GM13977 (cell line): ENCODE measurements at regions of chr3 and their contacts with region 1.

Region 1: GRCh38 chr3:153026026-153026425 is 136.0 kb upstream of the RAP2B start:
- DNase-seq: peak; percentile 24
- CTCF ChIP-seq: peak; percentile 64

Region 2: DNA sequence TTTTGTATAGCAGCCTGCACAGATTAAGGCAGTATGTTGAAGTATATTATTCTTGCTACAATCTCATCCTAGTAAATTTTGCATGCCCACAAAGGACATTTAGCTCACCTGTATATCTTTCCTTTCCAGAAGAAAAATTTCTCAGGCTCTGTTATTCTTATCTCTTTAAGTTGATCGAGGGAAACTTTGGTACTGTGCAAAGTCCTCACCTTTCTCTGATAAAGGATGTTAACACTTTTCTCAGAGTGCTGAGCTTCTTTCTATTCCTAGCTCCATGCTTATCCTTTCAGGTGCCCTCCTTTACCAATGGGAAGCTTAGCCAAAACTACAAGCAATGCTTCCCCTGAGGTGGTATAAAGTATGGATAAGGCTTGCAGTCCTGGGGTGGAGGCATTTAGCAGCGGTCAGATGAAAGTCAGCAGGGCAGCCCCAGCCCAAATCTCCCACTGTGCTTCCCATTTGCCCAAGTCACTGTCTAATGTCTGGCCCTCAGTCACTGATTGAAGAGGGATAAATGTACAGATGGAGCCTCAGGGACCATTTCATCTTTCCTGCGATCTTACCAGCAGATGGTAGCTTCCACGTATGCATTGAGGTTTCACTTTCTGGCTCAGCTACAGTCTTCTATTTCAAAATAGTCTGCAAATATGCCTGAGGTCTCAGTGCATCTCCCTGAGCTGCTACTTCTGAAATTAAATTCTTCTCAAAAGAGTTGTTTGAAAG is 318.9 kb before region 1 on chr3:
- in situ Hi-C with region 1: no loop called
- DNase-seq: no peak
- CTCF ChIP-seq: no peak

Region 3: GRCh38 chr3:153232910-153233271 is 206.9 kb after region 1 on chr3:
- in situ Hi-C with region 1: no loop called
- DNase-seq: no peak
- CTCF ChIP-seq: no peak

Region 4: DNA sequence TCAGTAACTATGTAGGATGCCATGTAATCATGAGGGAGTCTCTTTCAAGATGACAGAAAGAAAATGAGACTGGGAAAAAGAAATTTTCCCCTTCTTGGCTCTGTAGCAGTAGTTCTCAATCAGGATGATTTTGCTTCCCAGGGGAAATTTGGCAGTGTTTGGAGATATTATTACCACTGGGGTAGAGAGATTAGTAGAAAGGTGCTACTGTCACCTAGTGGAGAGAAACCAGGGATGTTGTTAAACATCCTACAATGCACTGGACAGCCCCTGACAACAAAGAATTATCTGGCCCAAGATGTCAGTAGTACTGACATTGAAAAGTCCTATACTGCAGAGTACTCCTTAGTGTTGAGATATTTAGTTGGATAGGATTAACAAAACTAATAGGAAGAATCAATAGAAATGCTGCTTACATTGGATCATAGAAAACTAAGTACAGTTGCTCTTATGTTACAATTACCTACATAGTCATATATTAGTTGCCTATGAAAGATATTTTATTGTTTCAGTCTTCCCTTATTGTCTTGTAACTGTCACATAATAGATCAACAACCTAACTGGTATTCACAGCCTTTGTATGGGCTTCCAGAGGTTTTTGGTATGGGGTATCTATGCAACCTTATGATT is 569.3 kb after region 1 on chr3:
- in situ Hi-C with region 1: loop called (anchors 25 kb)
- DNase-seq: peak; percentile 7
- CTCF ChIP-seq: peak; percentile 39

Region 5: DNA sequence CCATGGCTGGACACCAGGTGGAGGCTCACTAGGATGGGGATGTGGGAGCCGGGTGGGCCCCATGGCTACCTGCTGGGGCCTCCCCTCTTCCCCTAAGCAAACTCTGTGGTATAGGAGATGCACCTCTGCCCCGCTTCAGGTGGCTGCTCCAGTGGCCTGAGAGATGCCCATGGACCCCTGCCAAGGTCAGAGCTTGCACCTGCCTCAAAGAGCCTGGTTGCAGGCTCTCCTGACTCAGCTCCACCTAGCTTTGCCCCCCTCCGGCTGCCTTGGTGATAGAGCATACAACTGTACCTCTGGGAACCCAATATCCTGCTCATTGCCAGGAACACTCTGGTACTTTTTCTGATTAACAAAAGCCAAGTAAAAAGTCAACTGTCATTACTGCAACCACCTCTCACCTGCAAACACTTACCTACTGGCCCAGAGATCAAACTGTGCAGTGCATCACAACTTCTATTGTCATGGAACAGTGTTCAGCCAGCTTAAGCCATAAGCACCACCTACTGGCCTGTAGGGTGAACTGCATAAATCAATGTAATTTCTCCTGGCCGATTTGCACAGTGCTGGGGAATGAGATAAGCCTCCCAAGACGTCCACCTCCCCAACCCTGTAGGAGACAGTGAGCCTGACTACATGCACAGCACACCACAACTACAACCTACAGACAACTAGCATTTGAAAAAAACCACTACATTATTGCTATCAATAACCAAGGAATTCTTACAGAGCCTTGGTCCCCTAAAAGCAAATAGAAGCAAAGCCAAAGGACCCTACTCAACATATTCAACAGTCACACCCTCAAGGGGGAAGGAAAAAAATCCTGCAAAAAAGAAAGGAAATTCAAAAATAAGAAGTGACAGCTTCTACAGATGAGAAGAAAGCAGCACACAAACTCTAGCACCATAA is 742.8 kb after region 1 on chr3:
- in situ Hi-C with region 1: loop called (anchors 10 kb)
- DNase-seq: peak; percentile 59
- CTCF ChIP-seq: peak; percentile 91